ENCODE measurements at regions of chr10 and their contacts with region 1.

Region 1: GRCh38 chr10:102225646-102226541 is at the start of gene ELOVL3:
- DNase-seq: peak; percentile 57 to 86
- H3K4me3 ChIP-seq: no peak within 1 kb of the TSS
- H3K27ac ChIP-seq: no peak within 1 kb of the TSS
- H3K4me1 ChIP-seq: peaks cover 7% of the 10 kb centered on the region
- H3K27me3 ChIP-seq: no peaks in the 10 kb centered on the region
- CTCF ChIP-seq: no peak
- total RNA-seq, gene ELOVL3: 0.61 and 0.88 TPM in 2 replicates

Region 2: GRCh38 chr10:102090772-102091171 is 135.1 kb before region 1 on chr10:
- CTCF ChIA-PET with region 1: no interaction called
- POLR2A ChIA-PET with region 1: no interaction called
- intact Hi-C with region 1: no loop called
- DNase-seq: no peak
- H3K4me3 ChIP-seq: no peak overlapping the region
- H3K27ac ChIP-seq: no peak overlapping the region
- H3K4me1 ChIP-seq: no peaks in the 10 kb centered on the region
- H3K27me3 ChIP-seq: no peaks in the 10 kb centered on the region
- CTCF ChIP-seq: no peak

Region 3: GRCh38 chr10:102167861-102168260 is 58.0 kb before region 1 on chr10:
- CTCF ChIA-PET with region 1: interaction called, 6 read pairs
- POLR2A ChIA-PET with region 1: interaction called, 3 read pairs
- intact Hi-C with region 1: loop called (anchors 2 kb)
- DNase-seq: no peak
- H3K4me3 ChIP-seq: no peak overlapping the region
- H3K27ac ChIP-seq: no peak overlapping the region
- H3K4me1 ChIP-seq: no peaks in the 10 kb centered on the region
- H3K27me3 ChIP-seq: no peaks in the 10 kb centered on the region
- CTCF ChIP-seq: no peak

Region 4: GRCh38 chr10:102208311-102209035 is 17.4 kb before region 1 on chr10:
- CTCF ChIA-PET with region 1: no interaction called
- POLR2A ChIA-PET with region 1: no interaction called
- intact Hi-C with region 1: no loop called
- DNase-seq: no peak
- H3K4me3 ChIP-seq: no peak overlapping the region
- H3K27ac ChIP-seq: no peak overlapping the region
- H3K4me1 ChIP-seq: no peaks in the 10 kb centered on the region
- H3K27me3 ChIP-seq: no peaks in the 10 kb centered on the region
- CTCF ChIP-seq: no peak

Region 5: DNA sequence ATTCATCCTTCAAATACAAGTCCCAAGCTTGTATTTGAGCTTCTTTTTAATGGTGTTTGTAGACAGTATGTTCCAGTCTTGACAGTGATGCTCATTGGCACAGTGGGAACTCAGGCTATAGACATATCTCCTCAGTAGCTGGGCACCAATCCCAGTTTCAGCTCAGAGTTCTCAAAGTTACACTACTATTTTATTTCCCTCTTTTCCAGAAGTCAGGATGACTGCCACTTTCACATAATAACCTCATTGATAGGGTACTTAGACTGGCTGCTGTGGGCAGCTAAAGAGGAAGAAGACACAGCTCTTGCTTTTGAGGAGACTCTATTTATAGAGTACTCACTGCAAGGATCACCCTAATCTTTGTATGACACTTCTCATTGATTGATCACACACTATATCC is 21.8 kb after region 1 on chr10:
- CTCF ChIA-PET with region 1: interaction called, 3 read pairs
- POLR2A ChIA-PET with region 1: interaction called, 16 read pairs
- intact Hi-C with region 1: no loop called
- DNase-seq: no peak
- H3K4me3 ChIP-seq: no peak overlapping the region
- H3K27ac ChIP-seq: no peak overlapping the region
- H3K4me1 ChIP-seq: peaks cover 23% of the 10 kb centered on the region
- H3K27me3 ChIP-seq: no peaks in the 10 kb centered on the region
- CTCF ChIP-seq: no peak

Region 6: DNA sequence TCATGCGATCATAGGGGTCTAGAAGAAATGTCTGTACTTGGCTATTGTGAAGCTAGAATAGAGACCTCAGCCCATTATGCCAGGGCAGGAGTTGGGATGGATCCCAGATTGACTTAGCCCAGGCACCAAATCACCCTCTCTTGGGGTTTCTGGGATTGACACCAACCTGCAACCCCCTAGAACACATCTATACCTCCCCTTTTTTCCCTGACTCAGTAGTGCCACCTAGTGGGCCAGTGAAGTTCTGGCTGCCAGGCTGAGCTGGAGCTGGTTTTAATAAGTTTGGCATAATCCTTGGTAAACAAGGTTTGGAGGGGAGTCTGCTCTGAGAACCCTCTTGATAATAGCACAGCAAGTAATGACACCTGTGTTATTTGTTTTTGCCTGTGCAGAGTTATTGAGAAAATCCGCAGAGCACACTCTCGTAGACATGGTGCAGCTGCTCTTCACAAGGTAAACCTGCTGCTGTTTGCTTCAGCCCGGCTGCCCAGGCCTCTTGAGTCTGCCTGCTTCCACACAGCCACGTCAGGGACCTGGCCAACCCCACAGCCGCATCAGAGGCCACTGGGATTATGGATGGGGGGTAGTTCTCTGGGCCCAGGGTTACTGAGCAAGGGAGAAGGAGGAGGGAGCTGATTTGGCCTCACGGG is 126.3 kb after region 1 on chr10:
- CTCF ChIA-PET with region 1: interaction called, 17 read pairs
- POLR2A ChIA-PET with region 1: no interaction called
- intact Hi-C with region 1: loop called (anchors 1 kb)
- DNase-seq: peak in 1 of 2 experiments; percentile 41
- H3K4me3 ChIP-seq: no peak overlapping the region
- H3K27ac ChIP-seq: no peak overlapping the region
- H3K4me1 ChIP-seq: no peaks in the 10 kb centered on the region
- H3K27me3 ChIP-seq: no peaks in the 10 kb centered on the region
- CTCF ChIP-seq: peak; percentile 87

Region 7: DNA sequence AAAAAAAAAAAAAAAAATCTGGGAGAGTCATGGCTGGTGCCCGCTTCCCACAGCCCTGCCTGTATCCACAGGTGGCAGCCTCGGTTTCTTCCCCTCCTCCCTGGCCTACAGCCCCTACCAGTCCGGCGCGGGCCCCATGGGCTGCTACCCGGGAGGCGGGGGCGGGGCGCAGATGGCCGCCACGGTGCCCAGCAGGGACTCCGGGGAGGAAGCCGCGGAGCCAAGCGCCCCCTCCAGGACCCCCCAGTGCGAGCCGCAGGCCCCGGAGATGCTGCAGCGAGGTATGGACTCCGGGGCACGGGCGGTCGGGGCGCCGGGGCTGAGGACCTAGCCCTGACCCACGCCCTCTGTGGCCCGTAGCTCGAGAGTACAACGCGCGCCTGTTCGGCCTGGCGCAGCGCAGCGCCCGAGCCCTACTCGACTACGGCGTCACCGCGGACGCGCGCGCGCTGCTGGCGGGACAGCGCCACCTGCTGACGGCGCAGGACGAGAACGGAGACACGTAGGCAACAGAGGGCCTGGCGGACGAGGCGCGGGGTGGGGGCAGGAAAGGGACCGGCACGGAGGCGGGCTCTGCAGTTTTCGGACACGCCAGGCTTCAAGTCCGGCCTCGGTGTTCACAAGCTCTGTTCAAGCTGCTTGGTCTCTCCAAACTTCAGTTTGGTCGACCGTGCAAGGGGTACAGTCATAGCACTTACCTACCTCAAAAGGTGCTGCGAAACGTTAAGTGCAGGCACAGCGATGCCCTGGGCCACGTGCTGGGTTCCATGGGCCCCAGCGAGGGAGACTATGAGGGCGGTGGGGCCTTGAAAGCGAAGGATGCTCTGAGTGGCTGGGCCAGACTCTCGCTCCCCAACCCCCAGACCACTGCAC is 173.6 kb after region 1 on chr10:
- CTCF ChIA-PET with region 1: interaction called, 3 read pairs
- POLR2A ChIA-PET with region 1: no interaction called
- intact Hi-C with region 1: loop called (anchors 2 kb)
- DNase-seq: peak; percentile 56 to 83
- H3K4me3 ChIP-seq: peak overlapping the region; percentile 52
- H3K27ac ChIP-seq: no peak overlapping the region
- H3K4me1 ChIP-seq: peaks cover 18% of the 10 kb centered on the region
- H3K27me3 ChIP-seq: no peaks in the 10 kb centered on the region
- CTCF ChIP-seq: peak; percentile 80

Region 8: DNA sequence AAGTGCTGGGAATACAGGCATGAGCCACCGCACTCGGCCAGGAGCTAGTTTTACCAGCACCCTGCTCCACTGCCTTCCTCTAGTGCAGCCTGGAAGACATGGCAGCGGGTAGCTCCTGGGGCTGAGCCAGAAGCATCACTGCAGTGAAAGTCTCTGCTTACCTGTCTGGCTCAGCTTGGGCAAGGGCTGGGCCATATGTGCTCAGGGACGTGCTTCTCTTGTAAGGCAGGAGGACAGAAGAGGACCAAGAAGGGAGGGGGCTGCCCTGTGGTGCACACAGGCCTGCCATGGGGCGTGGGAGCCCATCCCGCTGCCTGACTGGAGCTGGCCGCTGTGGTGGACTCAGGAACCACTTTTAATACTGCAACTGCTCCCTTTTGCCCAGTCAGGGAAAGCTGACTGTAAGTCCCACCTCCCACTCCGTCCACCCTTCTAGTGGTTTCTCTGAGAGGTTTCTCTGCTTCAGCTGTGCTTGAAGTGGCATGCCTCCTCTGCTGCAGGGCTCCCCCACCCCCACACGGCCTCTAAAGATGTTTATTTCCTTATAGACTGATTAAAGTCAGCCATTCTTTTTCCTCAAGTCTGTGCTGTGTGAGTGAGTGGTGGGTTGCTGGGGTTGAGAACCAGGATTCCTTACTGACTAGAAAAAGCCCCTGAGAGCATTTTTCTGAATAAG is 250.7 kb after region 1 on chr10:
- CTCF ChIA-PET with region 1: no interaction called
- POLR2A ChIA-PET with region 1: no interaction called
- intact Hi-C with region 1: loop called (anchors 5 kb)
- DNase-seq: no peak
- H3K4me3 ChIP-seq: no peak overlapping the region
- H3K27ac ChIP-seq: no peak overlapping the region
- H3K4me1 ChIP-seq: no peaks in the 10 kb centered on the region
- H3K27me3 ChIP-seq: no peaks in the 10 kb centered on the region
- CTCF ChIP-seq: no peak

Region 9: DNA sequence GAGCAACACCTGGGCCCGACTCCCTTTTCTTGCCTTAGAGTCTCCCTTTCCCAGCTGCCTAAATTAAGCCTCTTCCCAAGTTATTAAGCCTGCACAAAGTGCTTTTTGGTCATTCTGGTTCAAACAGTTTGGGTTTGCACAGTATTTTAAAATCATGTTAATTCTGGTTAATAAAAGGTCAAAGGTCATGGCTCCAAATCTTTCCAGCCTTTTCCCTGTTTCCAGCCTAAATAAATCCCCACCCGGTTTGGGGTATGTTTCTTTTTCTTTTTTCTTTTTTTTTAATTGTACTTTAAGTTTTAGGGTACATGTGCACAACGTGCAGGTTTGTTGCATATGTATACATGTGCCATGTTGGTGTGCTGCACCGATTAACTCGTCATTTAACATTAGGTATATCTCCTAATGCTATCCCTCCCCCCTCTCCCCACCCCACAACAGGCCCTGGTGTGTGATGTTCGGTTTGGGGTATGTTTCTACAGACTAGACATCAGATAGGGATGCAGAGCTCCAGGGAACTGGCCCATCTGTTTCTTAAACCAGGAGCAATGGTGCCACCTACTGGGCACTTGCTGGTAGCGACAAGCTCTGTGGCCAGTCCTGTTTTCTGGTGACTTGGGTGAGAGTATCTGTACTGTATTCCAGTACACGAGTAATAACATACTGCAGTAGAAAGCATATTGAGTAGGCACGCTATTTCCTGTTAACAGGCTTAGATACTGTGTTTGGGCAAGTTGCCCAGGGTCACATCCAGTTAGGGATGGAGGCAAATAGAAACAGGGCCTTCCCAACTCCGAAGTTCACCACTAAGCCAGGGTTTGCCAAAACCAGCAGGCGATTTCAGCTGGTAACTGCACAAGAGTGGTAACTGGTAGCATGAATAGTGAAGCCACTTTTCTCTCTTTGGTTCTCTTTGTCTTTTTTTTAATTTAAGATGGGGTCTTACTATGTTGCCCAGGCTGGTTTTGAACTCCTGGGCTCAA is 357.8 kb after region 1 on chr10:
- CTCF ChIA-PET with region 1: interaction called, 10 read pairs
- POLR2A ChIA-PET with region 1: interaction called, 3 read pairs
- intact Hi-C with region 1: loop called (anchors 1 kb)
- DNase-seq: peak; percentile 60 to 66
- H3K4me3 ChIP-seq: no peak overlapping the region
- H3K27ac ChIP-seq: no peak overlapping the region
- H3K4me1 ChIP-seq: no peaks in the 10 kb centered on the region
- H3K27me3 ChIP-seq: no peaks in the 10 kb centered on the region
- CTCF ChIP-seq: peak; percentile 83